Activated B cell treated with CpG ODN at 0.5 μM for 24 hours (primary cell): ENCODE measurements at regions of chr3 and their contacts with region 1.

Region 1: DNA sequence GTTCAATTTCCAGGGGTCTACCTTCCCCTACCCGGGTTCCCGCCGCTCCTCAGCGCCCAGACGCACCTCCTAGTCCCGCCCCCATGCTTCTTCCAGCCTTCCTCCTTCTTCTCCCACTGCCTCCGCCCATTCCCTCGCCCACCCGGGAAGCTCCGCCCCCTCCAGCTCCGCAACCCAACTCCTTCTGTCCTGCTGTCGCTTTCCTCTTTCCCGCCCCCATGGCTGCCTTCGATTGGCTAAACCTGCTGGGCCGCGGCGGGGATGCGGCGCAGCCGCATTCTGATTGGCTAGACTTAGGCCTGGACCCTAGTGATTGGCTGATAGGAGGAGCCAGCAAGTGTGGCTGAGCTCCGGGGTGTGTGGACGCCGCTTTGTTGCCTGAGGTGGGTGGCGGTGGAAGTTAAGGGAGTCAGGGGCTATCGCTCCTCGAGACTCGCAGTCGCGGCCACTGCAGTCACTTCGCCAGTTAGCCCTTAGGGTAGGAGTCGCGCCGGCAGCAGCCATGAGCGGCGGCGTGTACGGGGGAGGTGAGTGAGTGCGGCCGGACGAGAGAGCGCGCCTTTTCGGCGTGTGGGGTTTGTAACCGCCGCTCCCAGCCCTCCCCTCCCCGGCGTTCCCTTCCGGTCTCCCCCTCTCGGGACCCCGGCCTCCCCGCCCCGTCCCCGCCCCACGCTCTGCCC is at the start of gene ACTL6A:
- DNase-seq: peak; percentile 94
- ATAC-seq: peak; percentile 92
- H3K4me3 Mint-ChIP-seq: peak within 1 kb of the TSS; percentile 99
- H3K27ac Mint-ChIP-seq: peak within 1 kb of the TSS; percentile 97
- H3K4me1 Mint-ChIP-seq: peaks cover 24% of the 10 kb centered on the region
- H3K27me3 Mint-ChIP-seq: no peaks in the 10 kb centered on the region
- CTCF ChIP-seq: no peak
- total RNA-seq, gene ACTL6A: 55.0 and 58.2 TPM in 2 replicates

Region 2: GRCh38 chr3:178436773-178437172 is 1126.0 kb before region 1 on chr3:
- CTCF ChIA-PET with region 1: interaction called, 3 read pairs
- POLR2A ChIA-PET with region 1: no interaction called
- intact Hi-C with region 1: loop called (anchors 2 kb)
- DNase-seq: no peak
- ATAC-seq: no peak
- H3K4me3 Mint-ChIP-seq: no peak overlapping the region
- H3K27ac Mint-ChIP-seq: no peak overlapping the region
- H3K4me1 Mint-ChIP-seq: no peaks in the 10 kb centered on the region
- H3K27me3 Mint-ChIP-seq: no peaks in the 10 kb centered on the region
- CTCF ChIP-seq: peak; percentile 28

Region 3: GRCh38 chr3:179108086-179108485 is 454.6 kb before region 1 on chr3:
- CTCF ChIA-PET with region 1: no interaction called
- POLR2A ChIA-PET with region 1: no interaction called
- intact Hi-C with region 1: loop called (anchors 2 kb)
- DNase-seq: no peak
- ATAC-seq: no peak
- H3K4me3 Mint-ChIP-seq: no peak overlapping the region
- H3K27ac Mint-ChIP-seq: no peak overlapping the region
- H3K4me1 Mint-ChIP-seq: no peaks in the 10 kb centered on the region
- H3K27me3 Mint-ChIP-seq: peaks cover 13% of the 10 kb centered on the region
- CTCF ChIP-seq: no peak

Region 4: DNA sequence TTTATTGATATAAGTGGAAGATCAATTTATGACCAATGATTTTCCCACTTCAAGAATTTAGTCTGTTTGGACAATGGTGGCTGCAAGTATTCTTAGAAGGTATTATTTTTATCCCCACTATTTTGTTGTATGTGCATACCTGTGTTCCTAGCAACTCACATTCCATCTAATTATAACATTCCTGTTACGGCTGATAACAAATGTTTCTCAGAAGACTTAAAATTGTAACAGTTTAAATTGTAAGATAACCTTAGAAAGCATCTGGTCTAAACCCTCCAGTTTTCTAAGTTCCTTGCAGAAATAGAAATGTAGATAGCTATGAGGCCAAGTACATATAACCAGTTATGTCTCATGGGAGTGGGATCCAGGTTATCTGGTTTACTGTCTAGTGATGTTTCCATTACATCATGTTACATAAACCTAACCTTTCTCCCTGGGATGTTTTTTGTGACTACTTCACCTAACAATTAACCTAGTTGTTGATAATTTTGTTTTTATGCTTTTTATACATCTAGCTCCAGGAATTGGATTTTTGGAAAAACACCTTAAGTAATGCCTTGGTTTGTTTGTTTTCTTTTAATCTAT is 226.3 kb before region 1 on chr3:
- CTCF ChIA-PET with region 1: no interaction called
- POLR2A ChIA-PET with region 1: no interaction called
- intact Hi-C with region 1: no loop called
- DNase-seq: no peak
- ATAC-seq: no peak
- H3K4me3 Mint-ChIP-seq: no peak overlapping the region
- H3K27ac Mint-ChIP-seq: no peak overlapping the region
- H3K4me1 Mint-ChIP-seq: peaks cover 2% of the 10 kb centered on the region
- H3K27me3 Mint-ChIP-seq: no peaks in the 10 kb centered on the region
- CTCF ChIP-seq: no peak

Region 5: DNA sequence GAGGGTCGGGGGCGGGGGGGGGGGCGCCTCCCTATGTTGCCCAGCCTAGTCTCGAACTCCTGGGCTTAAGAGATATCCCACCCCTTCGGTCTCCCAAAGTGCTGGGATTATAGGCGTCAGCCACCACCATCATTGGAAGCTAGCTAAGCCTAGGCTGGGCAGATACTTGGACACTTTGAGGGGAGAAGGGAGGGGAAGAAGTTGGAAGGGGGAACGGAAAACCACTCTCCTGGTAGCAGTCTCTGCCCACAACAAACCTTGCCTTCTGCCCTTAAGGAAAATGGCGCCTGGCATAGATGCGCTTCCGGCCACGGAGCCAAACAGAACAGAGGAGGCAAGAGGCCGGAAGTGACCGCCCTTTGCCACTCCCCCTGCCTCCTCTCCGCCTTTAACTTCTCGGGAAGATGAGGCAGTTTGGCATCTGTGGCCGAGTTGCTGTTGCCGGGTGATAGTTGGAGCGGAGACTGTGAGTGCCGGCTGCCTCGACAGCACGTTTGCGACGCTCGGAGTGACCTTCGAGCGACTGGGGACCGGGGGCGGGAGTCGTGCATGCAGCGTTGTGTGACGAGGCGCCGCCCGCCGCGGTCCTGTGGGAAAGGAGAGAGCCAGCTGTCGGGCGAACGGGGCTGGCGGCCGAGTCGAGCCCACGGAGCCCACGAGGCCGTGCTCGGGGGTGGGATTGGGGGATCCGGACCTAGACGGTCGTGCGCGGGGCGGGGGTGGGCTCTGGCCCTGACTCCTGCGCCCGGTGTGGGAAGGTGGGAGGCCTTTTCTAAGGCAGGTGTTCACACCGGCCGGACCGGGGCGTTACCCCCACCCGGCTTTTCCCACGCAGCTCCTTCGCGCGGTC is 215.2 kb before region 1 on chr3 and contains the start of gene MFN1:
- CTCF ChIA-PET with region 1: no interaction called
- POLR2A ChIA-PET with region 1: interaction called, 7 read pairs
- intact Hi-C with region 1: loop called (anchors 1 kb)
- DNase-seq: peak; percentile 80
- ATAC-seq: peak; percentile 88
- H3K4me3 Mint-ChIP-seq: peak within 1 kb of the TSS; percentile 98
- H3K27ac Mint-ChIP-seq: peak within 1 kb of the TSS; percentile 95
- H3K4me1 Mint-ChIP-seq: peaks cover 35% of the 10 kb centered on the region
- H3K27me3 Mint-ChIP-seq: no peaks in the 10 kb centered on the region
- CTCF ChIP-seq: no peak
- total RNA-seq, gene MFN1: 64.9 and 65.3 TPM in 2 replicates

Region 6: GRCh38 chr3:179410331-179410730 is 152.4 kb before region 1 on chr3:
- CTCF ChIA-PET with region 1: no interaction called
- POLR2A ChIA-PET with region 1: no interaction called
- intact Hi-C with region 1: no loop called
- DNase-seq: no peak
- ATAC-seq: no peak
- H3K4me3 Mint-ChIP-seq: no peak overlapping the region
- H3K27ac Mint-ChIP-seq: no peak overlapping the region
- H3K4me1 Mint-ChIP-seq: no peaks in the 10 kb centered on the region
- H3K27me3 Mint-ChIP-seq: no peaks in the 10 kb centered on the region
- CTCF ChIP-seq: no peak

Region 7: DNA sequence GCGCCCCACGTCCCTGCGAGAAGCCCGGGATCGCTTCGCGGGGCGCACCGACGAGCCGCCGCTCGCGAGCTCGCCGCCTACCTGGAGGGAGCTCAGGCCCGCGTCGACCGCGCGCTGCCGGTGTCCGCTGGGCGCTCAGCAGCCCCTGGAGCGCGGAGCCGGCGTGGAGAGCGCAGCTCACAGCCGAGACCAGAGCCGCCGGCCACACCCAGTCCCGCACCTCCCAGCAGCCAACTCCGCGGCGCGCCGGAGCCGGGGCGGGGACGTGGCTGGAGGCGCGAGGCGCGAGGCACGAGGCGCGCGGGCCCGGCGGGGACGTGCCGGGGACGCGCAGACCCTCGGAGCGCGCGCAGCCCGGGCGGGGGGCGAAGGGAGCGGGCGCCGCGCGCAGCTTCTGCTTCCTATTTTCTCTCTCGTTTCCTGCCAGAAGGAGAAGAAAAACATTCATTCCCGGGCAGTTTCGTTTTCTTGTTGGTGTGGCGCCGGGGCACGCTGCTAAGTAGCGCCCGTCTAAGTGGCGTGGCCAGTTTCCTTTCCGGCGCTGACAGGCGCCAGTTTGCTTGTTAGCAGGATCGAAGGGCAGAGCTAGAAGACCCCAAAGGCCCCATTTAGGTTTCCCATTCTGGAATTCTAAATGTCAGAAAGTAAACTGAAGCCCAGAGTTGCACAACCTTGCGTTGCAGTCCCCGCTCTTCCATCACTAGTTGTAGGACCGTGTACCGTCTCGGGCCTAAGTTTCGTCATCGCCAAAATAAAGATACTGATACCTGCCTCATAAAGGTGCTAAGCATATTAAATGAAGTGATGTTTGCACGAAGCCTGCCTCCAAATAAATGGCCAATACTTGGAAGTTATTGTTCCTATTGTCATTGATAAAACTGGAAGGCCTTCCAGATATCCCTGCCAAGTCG is 111.2 kb before region 1 on chr3 and contains the start of gene GNB4:
- CTCF ChIA-PET with region 1: interaction called, 5 read pairs
- POLR2A ChIA-PET with region 1: interaction called, 10 read pairs
- intact Hi-C with region 1: loop called (anchors 2 kb)
- DNase-seq: peak; percentile 74
- ATAC-seq: peak; percentile 88
- H3K4me3 Mint-ChIP-seq: peak within 1 kb of the TSS; percentile 92
- H3K27ac Mint-ChIP-seq: peak within 1 kb of the TSS; percentile 93
- H3K4me1 Mint-ChIP-seq: peaks cover 35% of the 10 kb centered on the region
- H3K27me3 Mint-ChIP-seq: no peaks in the 10 kb centered on the region
- CTCF ChIP-seq: no peak
- total RNA-seq, gene GNB4: 18.0 and 22.7 TPM in 2 replicates

Region 8: DNA sequence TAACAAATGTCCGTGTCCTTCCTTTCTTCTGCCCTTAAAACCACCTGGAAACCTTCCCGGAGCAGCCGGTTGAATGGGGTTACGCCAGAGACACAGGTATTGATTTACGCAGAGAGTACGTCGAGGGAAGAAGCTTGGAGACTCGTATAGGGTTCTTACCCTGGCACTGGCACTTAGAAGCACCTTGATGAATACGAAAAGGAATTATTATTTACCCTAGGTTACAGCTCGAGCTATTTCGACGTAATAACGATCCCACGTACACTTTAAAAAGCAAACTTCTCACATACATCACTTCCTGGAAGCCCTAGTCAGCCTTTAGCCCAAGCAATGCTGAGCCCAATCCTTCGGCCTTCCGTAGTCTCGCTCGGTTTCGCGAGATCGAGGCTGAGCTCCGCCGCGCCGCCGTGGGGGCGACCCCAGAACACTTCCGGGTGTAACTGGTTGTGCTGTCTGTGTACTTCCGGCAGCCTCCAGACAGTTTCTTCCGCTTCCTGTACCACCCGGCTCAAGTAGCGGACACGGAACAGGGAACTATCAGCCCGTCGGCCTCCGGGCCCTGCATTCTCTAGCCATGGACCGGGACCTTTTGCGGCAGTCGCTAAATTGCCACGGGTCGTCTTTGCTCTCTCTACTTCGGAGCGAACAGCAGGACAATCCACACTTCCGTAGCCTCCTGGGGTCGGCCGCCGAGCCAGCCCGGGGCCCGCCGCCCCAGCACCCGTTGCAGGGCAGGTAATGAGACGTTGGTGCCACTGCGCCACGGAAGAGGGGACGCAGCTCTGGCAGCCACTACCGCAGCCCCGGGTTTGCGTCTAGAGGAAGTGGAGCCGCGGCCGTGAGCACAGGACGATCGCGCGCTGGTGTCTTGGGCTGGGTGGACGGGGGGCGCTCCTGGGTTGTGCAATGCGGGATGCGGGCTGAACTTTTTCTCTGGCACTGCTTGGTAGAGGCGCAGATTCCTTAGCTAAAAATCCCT is 1039.2 kb after region 1 on chr3 and contains the start of gene TTC14:
- CTCF ChIA-PET with region 1: no interaction called
- POLR2A ChIA-PET with region 1: no interaction called
- intact Hi-C with region 1: loop called (anchors 1 kb)
- DNase-seq: peak; percentile 81
- ATAC-seq: peak; percentile 91
- H3K4me3 Mint-ChIP-seq: peak within 1 kb of the TSS; percentile 97
- H3K27ac Mint-ChIP-seq: peak within 1 kb of the TSS; percentile 95
- H3K4me1 Mint-ChIP-seq: peaks cover 22% of the 10 kb centered on the region
- H3K27me3 Mint-ChIP-seq: peaks cover 5% of the 10 kb centered on the region
- CTCF ChIP-seq: no peak
- total RNA-seq, gene TTC14: 81.5 and 82.2 TPM in 2 replicates